Activated T-helper 1 cell treated with anti-CD3 and anti-CD28 coated beads, Interleukin-12 subunit alpha, Interleukin-12 subunit beta, Interleukin-2, Interleukin-4 antibody, amounts not matched to agents 30 ng/mL and 10 ng/mL and 1 ng/mL, durations not matched to agents 14 hours and 24 hours and 36 hours (primary cell): ENCODE measurements at regions of chr20 and their contacts with region 1.

Region 1: DNA sequence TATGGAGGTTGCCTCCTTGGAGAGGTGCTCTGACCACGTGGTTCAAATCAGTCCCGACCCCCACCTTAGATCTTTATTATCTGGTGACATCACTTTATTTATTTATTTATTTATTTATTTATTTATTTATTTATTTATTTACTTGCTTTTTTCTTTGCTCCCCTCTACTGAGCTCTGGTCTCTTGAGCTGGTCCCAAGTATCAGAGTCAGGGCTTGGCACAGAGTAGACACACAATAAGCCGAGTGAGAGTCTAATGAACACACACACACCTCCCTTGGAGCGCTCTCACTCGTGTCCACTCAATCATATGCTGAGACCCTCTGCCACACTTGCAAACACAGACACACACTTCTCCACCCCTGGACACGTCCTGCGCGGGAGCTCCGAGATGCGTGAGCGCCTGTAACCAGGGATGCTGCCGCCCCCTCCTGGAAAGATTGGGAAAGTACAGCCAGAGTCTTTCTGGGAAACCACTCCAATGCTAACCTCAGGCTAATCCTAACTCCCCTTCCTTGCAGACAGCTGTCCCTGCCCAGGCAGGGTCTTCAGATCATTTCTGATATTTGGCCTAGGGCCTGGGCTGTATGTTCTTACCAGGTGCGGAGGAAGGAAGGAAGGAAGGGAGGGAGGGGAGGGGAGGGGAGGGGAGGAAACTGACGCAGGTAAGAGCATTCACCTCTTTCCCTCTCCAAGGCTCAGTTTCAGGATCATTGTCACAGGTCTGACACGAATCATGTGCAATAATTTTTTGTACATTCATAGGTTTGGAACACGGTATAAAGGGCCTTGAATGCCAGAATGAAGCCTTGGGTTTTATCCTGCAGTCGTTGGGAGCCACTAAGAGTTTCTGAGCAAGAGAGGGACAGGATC is 70.9 kb downstream of the STK35 start:
- DNase-seq: peak; percentile 40
- H3K4me3 Mint-ChIP-seq: no peak overlapping the region
- H3K27ac Mint-ChIP-seq: no peak overlapping the region
- H3K4me1 Mint-ChIP-seq: peaks cover 5% of the 10 kb centered on the region
- H3K27me3 Mint-ChIP-seq: peaks cover 5% of the 10 kb centered on the region

Region 2: GRCh38 chr20:1567392-1568162 is 605.0 kb before region 1 on chr20:
- intact Hi-C with region 1: no loop called
- DNase-seq: no peak
- H3K4me3 Mint-ChIP-seq: no peak overlapping the region
- H3K27ac Mint-ChIP-seq: no peak overlapping the region
- H3K4me1 Mint-ChIP-seq: no peaks in the 10 kb centered on the region
- H3K27me3 Mint-ChIP-seq: no peaks in the 10 kb centered on the region

Region 3: DNA sequence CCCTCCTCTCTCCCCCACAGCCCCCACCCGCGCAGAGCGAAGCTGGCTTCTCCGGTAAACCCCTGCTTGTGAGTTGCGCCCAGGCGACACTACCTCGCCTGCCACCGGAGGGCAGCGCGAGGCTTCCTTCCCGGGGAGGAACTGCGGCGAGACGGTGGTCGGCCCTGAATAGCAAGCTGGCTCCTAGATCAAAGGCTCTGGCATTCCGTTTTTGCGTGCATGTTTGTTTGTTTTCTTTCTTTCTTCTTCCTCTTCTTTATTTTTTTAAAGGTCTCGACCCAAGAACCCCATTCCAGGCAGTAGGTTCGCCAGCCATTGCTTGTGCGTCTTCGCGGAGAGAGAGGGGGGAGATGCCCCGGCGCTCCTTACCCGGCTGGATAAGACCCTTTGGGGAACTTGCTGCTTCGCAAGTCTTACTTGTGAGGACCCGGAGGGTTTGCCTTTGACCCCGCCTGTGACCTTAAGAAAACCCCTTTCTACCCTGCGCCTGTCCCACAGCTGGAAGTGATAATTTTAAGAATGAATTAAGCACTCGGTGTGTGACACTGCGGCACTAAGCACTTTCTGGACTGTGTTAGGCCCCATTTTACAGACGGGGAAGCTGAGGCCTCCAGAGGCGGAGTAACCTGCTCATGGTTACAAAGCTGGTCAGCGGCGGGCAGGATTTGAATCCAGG is 370.0 kb before region 1 on chr20:
- intact Hi-C with region 1: loop called (anchors 1 kb)
- DNase-seq: peak; percentile 7
- H3K4me3 Mint-ChIP-seq: peak overlapping the region; percentile 68
- H3K27ac Mint-ChIP-seq: no peak overlapping the region
- H3K4me1 Mint-ChIP-seq: peaks cover 12% of the 10 kb centered on the region
- H3K27me3 Mint-ChIP-seq: peaks cover 44% of the 10 kb centered on the region

Region 4: DNA sequence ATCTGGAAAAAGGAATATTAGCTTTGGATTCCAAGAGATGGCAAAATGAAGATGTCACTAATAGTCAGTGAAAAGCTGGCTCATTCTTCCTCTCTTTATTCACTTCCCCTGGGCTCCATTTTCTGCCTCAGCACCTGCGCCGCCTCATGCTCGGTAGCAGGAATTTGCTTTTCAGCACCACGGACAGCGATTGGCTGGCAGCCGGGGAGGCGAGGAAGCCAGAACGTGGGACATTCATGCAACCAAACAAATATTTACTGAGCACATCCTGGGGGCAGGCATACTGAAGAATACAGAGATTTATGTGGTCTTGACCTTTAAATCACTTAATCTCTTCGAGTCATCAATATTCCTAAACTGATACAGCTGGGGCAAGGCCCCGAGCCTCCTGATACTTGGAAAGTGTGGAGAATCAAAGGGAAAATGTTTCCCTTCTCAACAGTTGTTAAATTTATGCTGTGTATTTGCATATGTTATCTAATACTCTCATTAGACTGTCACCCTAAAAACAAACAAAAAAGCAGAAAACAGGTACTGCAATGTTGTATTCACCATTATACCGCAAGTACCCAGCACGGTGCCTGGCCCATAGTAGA is 166.6 kb before region 1 on chr20:
- intact Hi-C with region 1: loop called (anchors 1 kb)
- DNase-seq: peak; percentile 54
- H3K4me3 Mint-ChIP-seq: no peak overlapping the region
- H3K27ac Mint-ChIP-seq: no peak overlapping the region
- H3K4me1 Mint-ChIP-seq: no peaks in the 10 kb centered on the region
- H3K27me3 Mint-ChIP-seq: peaks cover 14% of the 10 kb centered on the region

Region 5: DNA sequence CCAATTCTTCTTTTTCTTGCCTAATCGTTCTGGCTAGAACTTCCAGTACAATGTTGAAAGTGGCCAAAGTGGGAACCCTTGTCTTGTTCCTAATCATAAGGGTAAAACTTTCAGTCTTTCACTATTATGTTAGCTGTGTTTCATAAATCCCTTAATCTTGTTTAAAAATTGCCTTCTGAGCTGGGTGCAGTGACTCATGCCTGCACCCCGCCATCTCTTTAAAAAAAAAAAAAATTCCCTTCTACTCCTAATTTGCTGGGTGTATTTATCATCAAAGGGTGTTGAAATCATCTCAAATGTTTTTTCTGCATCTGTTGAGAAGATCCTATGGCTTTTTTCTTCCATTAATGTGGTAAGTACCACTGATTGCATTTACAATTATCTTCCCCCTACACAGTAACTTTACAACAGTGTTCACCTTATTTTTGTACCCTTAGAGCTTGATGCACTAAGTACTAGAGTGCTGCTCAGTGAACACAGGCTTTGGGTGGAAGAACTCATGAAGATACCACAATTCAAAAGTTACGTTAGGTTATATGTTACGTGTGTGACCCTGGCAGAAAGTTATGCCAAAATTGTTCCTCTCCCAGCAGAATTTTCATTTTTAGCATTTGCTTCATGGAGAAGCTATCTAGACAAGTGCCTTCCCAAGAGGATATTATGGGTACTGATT is 288.3 kb after region 1 on chr20:
- intact Hi-C with region 1: no loop called
- DNase-seq: no peak
- H3K4me3 Mint-ChIP-seq: no peak overlapping the region
- H3K27ac Mint-ChIP-seq: no peak overlapping the region
- H3K4me1 Mint-ChIP-seq: peaks cover 12% of the 10 kb centered on the region
- H3K27me3 Mint-ChIP-seq: no peaks in the 10 kb centered on the region